Ascending aorta (tissue), 2 donors: ENCODE measurements at regions of chr18 and their contacts with region 1.

Region 1: GRCh38 chr18:23237524-23238151 is 102.4 kb downstream of the CABLES1 start:
- DNase-seq: peak; percentile 30 to 84
- H3K4me3 ChIP-seq: peak overlapping the region; percentile 38 to 58
- H3K27ac ChIP-seq: peak overlapping the region; percentile 91 to 92
- H3K4me1 ChIP-seq: peaks cover 0 to 23% of the 10 kb centered on the region in 2 donors
- H3K27me3 ChIP-seq: no peaks in the 10 kb centered on the region
- CTCF ChIP-seq: peak; percentile 44 to 48 (median 44)

Region 2: DNA sequence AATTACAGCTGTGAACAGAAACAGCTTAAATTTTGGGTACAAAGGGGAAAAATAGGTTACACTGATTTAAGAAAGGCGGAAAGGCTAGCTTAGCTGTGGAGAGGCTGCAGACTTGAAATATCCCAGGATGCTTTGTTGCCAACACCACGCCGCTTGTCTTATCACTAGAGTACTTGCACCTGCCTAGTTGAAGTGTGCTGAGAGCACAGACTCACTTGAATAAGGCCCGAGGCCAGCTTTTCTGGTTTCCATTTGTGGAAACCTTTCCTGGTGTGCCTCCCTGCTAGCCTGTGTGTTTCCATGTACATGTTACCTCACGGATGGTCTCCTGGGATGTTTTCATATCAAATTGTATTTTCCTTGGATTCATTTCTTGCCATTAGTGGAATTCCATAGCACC is 99.2 kb before region 1 on chr18:
- intact Hi-C with region 1: loop called (anchors 1 kb)
- DNase-seq: no peak
- H3K4me3 ChIP-seq: peak overlapping the region in 1 of 2 donors; percentile 76
- H3K27ac ChIP-seq: no peak overlapping the region
- H3K4me1 ChIP-seq: peaks cover 13 to 32% of the 10 kb centered on the region in 2 donors
- H3K27me3 ChIP-seq: no peaks in the 10 kb centered on the region
- CTCF ChIP-seq: no peak

Region 3: GRCh38 chr18:23250893-23251656 is 13.4 kb after region 1 on chr18:
- intact Hi-C with region 1: loop called (anchors 2 kb)
- DNase-seq: peak in 1 of 2 donors; percentile 87
- H3K4me3 ChIP-seq: no peak overlapping the region
- H3K27ac ChIP-seq: peak overlapping the region; percentile 63 to 69
- H3K4me1 ChIP-seq: peaks cover 0 to 12% of the 10 kb centered on the region in 2 donors
- H3K27me3 ChIP-seq: no peaks in the 10 kb centered on the region
- CTCF ChIP-seq: no peak

Region 4: DNA sequence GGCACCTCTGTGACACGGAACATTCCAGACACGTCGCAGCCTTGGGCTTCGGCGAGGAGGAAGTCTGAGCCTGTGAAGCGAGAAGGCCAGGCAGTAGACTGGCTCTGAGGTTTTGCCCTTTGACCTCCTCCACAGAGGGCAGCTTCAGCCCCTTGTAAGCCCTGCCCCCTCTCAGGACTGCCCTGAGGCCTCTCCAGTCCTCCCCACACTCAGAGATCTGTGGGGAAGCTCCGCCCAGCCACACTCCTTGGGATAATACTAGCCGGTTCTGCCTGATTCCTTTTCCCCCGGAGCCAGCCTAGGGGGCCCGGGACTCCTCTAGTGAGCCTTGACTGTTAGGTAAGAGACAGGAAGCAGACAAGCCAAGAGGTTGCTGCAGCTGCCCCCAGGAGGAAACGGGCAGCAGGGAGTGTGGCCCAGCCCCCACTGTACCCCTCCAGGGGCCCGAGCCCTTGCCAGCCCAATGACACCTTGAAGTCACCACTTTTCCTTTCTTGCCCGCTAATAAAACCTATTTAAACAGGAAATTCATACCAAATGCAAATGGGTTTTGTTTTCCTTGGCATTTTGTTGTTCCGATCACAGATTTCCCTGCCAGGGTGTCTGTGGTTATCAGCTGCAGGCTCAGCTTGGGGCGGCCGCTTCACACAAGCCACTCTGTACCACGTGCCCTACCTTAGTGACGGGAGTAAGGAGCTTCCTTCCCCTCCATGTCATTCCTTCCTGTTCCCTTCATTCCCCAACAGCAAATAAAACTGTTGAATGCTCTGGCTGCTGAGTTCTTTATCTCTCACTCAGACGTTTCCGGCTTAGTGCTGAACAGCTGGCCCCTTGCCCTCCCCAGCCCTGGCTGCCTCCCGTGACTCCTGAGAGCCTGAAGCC is 22.3 kb after region 1 on chr18:
- intact Hi-C with region 1: loop called (anchors 2 kb)
- DNase-seq: peak; percentile 46 to 89
- H3K4me3 ChIP-seq: peak overlapping the region; percentile 39 to 55
- H3K27ac ChIP-seq: peak overlapping the region; percentile 95 to 97
- H3K4me1 ChIP-seq: peaks cover 18 to 30% of the 10 kb centered on the region in 2 donors
- H3K27me3 ChIP-seq: no peaks in the 10 kb centered on the region
- CTCF ChIP-seq: no peak

Region 5: GRCh38 chr18:23317975-23318675 is 80.5 kb after region 1 on chr18:
- intact Hi-C with region 1: no loop called
- DNase-seq: no peak
- H3K4me3 ChIP-seq: no peak overlapping the region
- H3K27ac ChIP-seq: no peak overlapping the region
- H3K4me1 ChIP-seq: peaks cover 0 to 9% of the 10 kb centered on the region in 2 donors
- H3K27me3 ChIP-seq: no peaks in the 10 kb centered on the region
- CTCF ChIP-seq: no peak

Region 6: DNA sequence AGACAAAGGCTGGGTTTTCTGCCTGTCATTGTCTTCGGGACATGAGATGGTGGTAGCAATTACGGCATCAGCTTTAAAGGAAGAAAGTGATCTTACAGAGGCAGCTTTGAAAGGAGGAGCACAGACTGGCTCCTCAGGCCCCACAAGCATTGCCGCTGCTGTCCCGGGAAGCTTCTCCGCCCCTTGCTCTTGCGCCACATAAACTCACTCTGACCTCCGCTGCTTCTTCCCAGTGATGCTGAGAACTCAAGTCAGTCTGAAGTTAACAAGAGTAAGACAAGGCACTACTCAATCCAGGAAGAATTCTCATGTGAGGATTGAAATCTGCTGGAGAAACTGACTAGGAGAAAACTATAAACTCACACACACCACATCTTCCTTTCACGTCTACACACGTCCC is 103.0 kb after region 1 on chr18:
- intact Hi-C with region 1: loop called (anchors 5 kb)
- DNase-seq: no peak
- H3K4me3 ChIP-seq: no peak overlapping the region
- H3K27ac ChIP-seq: peak overlapping the region; percentile 13 to 67
- H3K4me1 ChIP-seq: peaks cover 3 to 8% of the 10 kb centered on the region in 2 donors
- H3K27me3 ChIP-seq: no peaks in the 10 kb centered on the region
- CTCF ChIP-seq: no peak